ENCODE measurements at regions of chr10 and their contacts with region 1.

Region 1: GRCh38 chr10:11782793-11783557 is 40.2 kb upstream of the PROSER2 start:
- DNase-seq: peak; percentile 35
- ATAC-seq: peak; percentile 83
- H3K4me3 ChIP-seq: no peak overlapping the region
- H3K27ac ChIP-seq: no peak overlapping the region
- H3K4me1 ChIP-seq: no peaks in the 10 kb centered on the region
- H3K27me3 ChIP-seq: no peaks in the 10 kb centered on the region
- CTCF ChIP-seq: peak; percentile 49 to 72 (median 60); a peak in 5 of 6 replicates
- EP300 ChIP-seq: no peak
- POLR2A ChIP-seq: no peak
- RAD21 ChIP-seq: peak; percentile 51

Region 2: DNA sequence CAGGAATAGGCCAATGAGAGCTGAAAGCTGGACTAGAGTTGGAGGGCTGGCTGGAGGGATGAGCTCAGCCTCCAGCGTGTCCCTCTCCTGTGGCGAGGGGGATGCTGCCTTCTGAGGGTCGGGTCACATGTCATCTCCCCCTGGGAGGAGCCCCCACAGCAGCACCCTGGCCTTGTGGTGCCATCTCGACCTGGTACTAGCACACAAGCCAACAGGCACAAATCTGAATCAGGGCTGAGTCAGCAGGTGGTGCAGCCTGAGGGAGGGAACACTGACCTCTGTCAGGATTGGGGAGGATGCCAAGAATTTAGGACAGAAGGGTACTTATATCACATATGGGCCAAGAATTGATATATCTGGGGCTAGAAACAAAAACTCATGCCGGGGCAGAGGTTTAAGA is 484.9 kb before region 1 on chr10:
- CTCF ChIA-PET with region 1: no interaction called
- POLR2A ChIA-PET with region 1: no interaction called
- RAD21 ChIA-PET with region 1: no interaction called
- SMC1A ChIA-PET with region 1: no interaction called
- in situ Hi-C with region 1: no loop called
- intact Hi-C with region 1: no loop called
- DNase-seq: no peak
- ATAC-seq: no peak
- H3K4me3 ChIP-seq: no peak overlapping the region
- H3K27ac ChIP-seq: no peak overlapping the region
- H3K4me1 ChIP-seq: no peaks in the 10 kb centered on the region; the same call in 1 of the 2 replicates
- H3K27me3 ChIP-seq: no peaks in the 10 kb centered on the region
- CTCF ChIP-seq: no peak
- EP300 ChIP-seq: no peak
- POLR2A ChIP-seq: peak; percentile 47; the same call in 1 of the 2 replicates
- RAD21 ChIP-seq: no peak

Region 3: GRCh38 chr10:11765141-11765540 is 17.8 kb before region 1 on chr10:
- CTCF ChIA-PET with region 1: interaction called, 11 read pairs
- POLR2A ChIA-PET with region 1: no interaction called
- RAD21 ChIA-PET with region 1: interaction called, 3 read pairs
- SMC1A ChIA-PET with region 1: interaction called, 3 read pairs
- in situ Hi-C with region 1: no loop called
- intact Hi-C with region 1: no loop called
- DNase-seq: no peak
- ATAC-seq: no peak
- H3K4me3 ChIP-seq: no peak overlapping the region
- H3K27ac ChIP-seq: no peak overlapping the region
- H3K4me1 ChIP-seq: no peaks in the 10 kb centered on the region
- H3K27me3 ChIP-seq: no peaks in the 10 kb centered on the region
- CTCF ChIP-seq: no peak
- EP300 ChIP-seq: no peak
- POLR2A ChIP-seq: no peak
- RAD21 ChIP-seq: no peak

Region 4: GRCh38 chr10:11793762-11794479 is 10.9 kb after region 1 on chr10:
- CTCF ChIA-PET with region 1: interaction called, 25 read pairs
- POLR2A ChIA-PET with region 1: no interaction called
- RAD21 ChIA-PET with region 1: no interaction called
- SMC1A ChIA-PET with region 1: interaction called, 4 read pairs
- in situ Hi-C with region 1: no loop called
- intact Hi-C with region 1: no loop called
- DNase-seq: no peak
- ATAC-seq: no peak
- H3K4me3 ChIP-seq: no peak overlapping the region
- H3K27ac ChIP-seq: no peak overlapping the region
- H3K4me1 ChIP-seq: no peaks in the 10 kb centered on the region
- H3K27me3 ChIP-seq: no peaks in the 10 kb centered on the region; a peak in 1 of 4 replicates
- CTCF ChIP-seq: no peak
- EP300 ChIP-seq: no peak
- POLR2A ChIP-seq: no peak
- RAD21 ChIP-seq: no peak

Measured in GM12878 (cell line).